GM13977 (cell line): ENCODE measurements at regions of chr15 and their contacts with region 1.

Region 1: DNA sequence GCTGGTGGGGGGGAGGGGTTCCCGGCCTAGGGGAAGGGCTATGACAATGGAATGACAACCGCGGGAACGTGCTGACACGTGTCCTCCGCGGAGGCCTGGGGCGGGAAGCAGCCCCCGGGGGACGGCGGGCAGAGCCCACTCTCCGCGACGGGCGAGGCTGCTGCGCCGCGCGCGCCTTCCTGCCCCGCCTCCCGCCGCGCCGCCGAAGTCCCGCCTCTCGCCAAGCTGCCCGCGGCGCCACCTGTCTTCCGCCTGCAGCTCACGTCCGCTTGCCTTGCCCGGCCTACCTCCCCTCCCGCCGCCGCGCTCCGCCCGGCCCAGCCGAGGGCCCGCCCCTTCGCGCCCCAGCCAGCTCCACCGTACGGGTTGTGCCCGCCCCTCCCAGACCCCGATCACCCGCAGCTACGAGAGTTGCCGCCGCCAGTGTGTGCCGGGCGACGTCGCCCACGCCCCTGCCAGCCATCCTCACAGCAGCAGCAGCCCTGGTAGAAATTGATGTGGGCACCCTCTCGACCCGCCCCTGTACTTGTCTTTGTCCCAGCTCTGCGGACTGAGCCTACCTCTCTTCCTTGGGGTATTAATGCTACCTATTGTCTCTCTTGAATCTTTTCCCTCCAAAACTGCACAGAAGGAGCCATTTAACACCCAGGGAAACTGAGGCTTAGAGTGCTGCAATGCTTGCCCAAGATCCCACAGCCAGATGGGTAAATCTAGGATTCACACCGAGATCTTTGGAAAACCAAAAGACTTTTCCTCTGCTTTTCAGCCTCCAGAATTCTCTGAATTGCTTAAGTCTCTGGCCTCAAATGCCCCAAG is at the start of gene PARP16:
- DNase-seq: peak; percentile 93
- CTCF ChIP-seq: peak; percentile 55

Region 2: DNA sequence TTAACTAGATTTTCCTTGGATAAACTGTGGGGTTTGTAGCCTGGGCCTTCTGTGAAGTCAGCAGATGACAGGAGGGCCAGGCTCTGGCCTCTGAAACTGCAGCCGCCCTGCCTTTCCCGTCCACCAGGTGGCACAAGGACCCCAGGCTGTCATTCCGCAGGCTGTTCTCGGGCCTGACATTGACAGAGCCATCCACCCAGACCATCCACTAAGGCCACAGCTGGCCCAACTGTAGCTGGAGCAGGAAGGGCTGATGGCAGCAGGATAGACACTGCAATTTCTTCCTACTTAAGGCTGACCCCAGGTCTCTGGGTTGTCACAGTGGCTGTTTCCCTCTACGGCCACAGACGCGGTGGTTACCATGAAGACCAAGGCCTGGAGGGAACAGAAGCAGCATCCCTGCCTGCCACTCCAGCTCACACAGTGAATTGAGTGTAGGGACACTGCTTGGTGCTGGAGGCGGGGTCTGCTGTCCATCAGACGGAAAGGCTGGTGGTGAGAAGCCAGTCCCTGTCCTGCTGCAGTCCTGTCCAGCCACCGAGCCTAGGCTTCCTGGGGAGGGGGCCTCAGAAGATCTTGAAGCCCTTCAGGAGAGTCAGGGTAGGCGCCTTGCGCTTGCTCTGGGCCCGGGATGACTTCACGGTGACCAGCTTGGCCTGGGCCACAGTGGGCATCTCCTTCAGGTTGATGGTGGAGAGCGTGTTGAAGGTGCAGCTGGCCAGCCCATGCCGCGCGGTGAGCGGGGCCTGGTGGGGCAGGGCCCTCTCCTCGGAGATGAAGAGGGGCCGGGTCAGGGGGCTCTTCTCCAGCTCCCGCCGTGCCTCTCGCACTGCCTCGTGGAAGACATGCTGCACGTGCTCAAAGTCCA is 232.3 kb before region 1 on chr15:
- in situ Hi-C with region 1: loop called (anchors 25 kb)
- DNase-seq: peak; percentile 85
- CTCF ChIP-seq: peak; percentile 91

Region 3: GRCh38 chr15:65184868-65185738 is 101.8 kb before region 1 on chr15 and contains the start of gene CLPX:
- in situ Hi-C with region 1: loop called (anchors 25 kb)
- DNase-seq: peak; percentile 91
- CTCF ChIP-seq: no peak